ENCODE measurements at regions of chr18 and their contacts with region 1.

Region 1: DNA sequence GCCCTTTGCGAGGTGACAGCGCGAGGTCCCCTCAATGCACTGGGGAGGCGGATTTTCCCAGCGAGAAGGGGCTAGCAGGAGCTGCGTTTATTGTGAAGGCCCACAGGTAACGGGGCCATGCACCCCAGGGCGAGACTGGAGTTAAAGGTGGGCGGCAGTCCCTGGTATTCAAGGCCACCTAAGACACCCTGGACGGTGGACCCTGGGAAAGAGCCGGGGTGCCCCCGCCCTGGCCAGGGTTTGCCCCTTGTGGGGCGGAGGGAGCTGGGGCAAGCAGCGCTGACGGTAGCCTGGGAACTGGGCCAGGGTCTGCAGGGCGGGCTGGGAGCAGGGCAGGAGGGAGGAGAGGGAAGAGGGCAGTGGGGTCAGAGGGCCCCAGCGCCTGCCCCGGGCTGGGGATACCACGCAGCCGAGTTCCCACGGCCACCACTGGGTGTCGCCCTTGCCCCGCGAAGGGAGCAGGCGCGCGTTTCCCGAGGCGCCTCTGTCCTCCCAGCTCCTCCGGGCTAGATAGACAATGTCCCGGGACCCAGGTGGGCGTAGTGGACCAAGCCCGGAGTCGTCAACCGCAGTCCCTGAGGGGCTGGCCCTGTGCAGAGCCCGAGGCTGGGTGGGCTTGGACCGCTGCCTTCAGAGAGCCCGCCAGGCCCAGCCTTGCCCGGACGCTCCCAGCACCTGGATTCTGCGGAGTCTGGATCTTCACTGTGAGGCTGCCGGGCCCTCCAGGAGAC is 80.2 kb downstream of the SMAD4 start:
- DNase-seq: peak; percentile 12 to 83 (median 56)
- ATAC-seq: peak; percentile 85
- H3K4me3 ChIP-seq: no peak overlapping the region
- H3K4me3 Mint-ChIP-seq: no peak overlapping the region
- H3K27ac ChIP-seq: no peak overlapping the region
- H3K27ac Mint-ChIP-seq: no peak overlapping the region
- H3K4me1 ChIP-seq: peaks cover 0 to 9% of the 10 kb centered on the region in 2 donors
- H3K4me1 Mint-ChIP-seq: peaks cover 10 to 16% (median 13%) of the 10 kb centered on the region in 7 donors
- H3K27me3 ChIP-seq: no peaks in the 10 kb centered on the region
- H3K27me3 Mint-ChIP-seq: no peaks in the 10 kb centered on the region

Region 2: GRCh38 chr18:51153659-51154371 is 43.6 kb after region 1 on chr18:
- CTCF ChIA-PET with region 1: no interaction called
- POLR2A ChIA-PET with region 1: no interaction called
- intact Hi-C with region 1: loop called in 1 of 2 experiments (anchors 1 kb)
- DNase-seq: peak; percentile 35 to 65 (median 55)
- ATAC-seq: peak; percentile 76
- H3K4me3 ChIP-seq: peak overlapping the region; percentile 52
- H3K4me3 Mint-ChIP-seq: peak overlapping the region; percentile 80 to 96 (median 87)
- H3K27ac ChIP-seq: peak overlapping the region; percentile 61
- H3K27ac Mint-ChIP-seq: peak overlapping the region; percentile 91 to 98 (median 94)
- H3K4me1 ChIP-seq: peaks cover 22 to 23% of the 10 kb centered on the region in 2 donors
- H3K4me1 Mint-ChIP-seq: peaks cover 19 to 44% (median 37%) of the 10 kb centered on the region in 7 donors
- H3K27me3 ChIP-seq: no peaks in the 10 kb centered on the region
- H3K27me3 Mint-ChIP-seq: no peaks in the 10 kb centered on the region

Region 3: GRCh38 chr18:51171223-51171622 is 61.0 kb after region 1 on chr18:
- CTCF ChIA-PET with region 1: no interaction called
- POLR2A ChIA-PET with region 1: no interaction called
- intact Hi-C with region 1: loop called in 1 of 2 experiments (anchors 1 kb)
- DNase-seq: no peak
- ATAC-seq: no peak
- H3K4me3 ChIP-seq: no peak overlapping the region
- H3K4me3 Mint-ChIP-seq: peak overlapping the region in 1 of 10 donors; percentile 44
- H3K27ac ChIP-seq: no peak overlapping the region
- H3K27ac Mint-ChIP-seq: peak overlapping the region in 5 of 9 donors; percentile 25 to 83 (median 46)
- H3K4me1 ChIP-seq: no peaks in the 10 kb centered on the region
- H3K4me1 Mint-ChIP-seq: peaks cover under 1 to 66% (median 31%) of the 10 kb centered on the region in 7 donors
- H3K27me3 ChIP-seq: no peaks in the 10 kb centered on the region
- H3K27me3 Mint-ChIP-seq: no peaks in the 10 kb centered on the region

Region 4: DNA sequence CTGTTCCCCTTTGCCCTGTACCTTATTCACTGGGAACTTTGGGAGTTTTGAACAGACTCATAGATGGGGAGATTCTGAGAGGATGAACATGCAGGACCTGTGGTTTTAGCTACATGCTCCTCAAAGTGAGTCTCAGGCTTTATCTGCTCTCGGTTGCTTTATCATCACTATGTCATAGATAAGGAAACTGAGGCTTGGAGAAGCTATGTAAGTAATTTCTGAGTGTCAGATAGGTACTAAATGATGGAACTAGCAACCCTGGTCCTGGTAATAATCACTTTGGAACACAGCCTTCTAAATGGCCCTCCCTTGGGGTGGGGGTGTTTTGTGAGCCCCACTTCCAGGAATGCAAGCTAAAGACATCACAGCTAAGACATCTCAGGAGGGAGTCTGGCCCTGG is 273.5 kb after region 1 on chr18:
- CTCF ChIA-PET with region 1: no interaction called
- POLR2A ChIA-PET with region 1: no interaction called
- intact Hi-C with region 1: loop called (anchors 1 kb)
- DNase-seq: no peak
- ATAC-seq: no peak
- H3K4me3 ChIP-seq: no peak overlapping the region
- H3K4me3 Mint-ChIP-seq: no peak overlapping the region
- H3K27ac ChIP-seq: no peak overlapping the region
- H3K27ac Mint-ChIP-seq: no peak overlapping the region
- H3K4me1 ChIP-seq: no peaks in the 10 kb centered on the region
- H3K4me1 Mint-ChIP-seq: no peaks in the 10 kb centered on the region
- H3K27me3 ChIP-seq: no peaks in the 10 kb centered on the region
- H3K27me3 Mint-ChIP-seq: peaks cover 0 to 9% (median 6%) of the 10 kb centered on the region in 5 donors

Region 5: DNA sequence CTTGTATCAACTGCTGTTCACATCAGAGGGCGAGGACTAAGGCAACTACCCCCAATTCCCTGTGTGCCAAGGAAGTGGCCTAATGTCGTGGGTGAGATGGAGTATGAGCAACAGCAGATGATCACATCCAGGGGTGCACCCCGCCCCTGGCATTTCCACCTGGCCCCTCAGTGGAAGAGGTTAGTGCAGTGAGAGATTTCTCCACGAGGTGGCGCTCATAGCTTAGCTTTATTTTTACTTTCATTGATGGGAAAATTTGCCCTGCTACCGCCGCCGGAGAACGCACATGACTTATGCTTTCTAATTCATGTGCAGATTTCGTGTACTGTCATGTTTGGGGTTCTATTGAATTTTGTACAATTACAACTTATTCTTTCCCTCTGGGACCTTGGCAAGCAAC is 557.9 kb after region 1 on chr18:
- CTCF ChIA-PET with region 1: no interaction called
- POLR2A ChIA-PET with region 1: no interaction called
- intact Hi-C with region 1: loop called in 1 of 2 experiments (anchors 5 kb)
- DNase-seq: peak in 2 of 9 donors; percentile 2 to 39
- ATAC-seq: no peak
- H3K4me3 ChIP-seq: no peak overlapping the region
- H3K4me3 Mint-ChIP-seq: no peak overlapping the region
- H3K27ac ChIP-seq: no peak overlapping the region
- H3K27ac Mint-ChIP-seq: no peak overlapping the region
- H3K4me1 ChIP-seq: no peaks in the 10 kb centered on the region
- H3K4me1 Mint-ChIP-seq: peaks cover 0 to 3% (median 0%) of the 10 kb centered on the region in 7 donors
- H3K27me3 ChIP-seq: peaks cover 0 to 7% of the 10 kb centered on the region in 2 donors
- H3K27me3 Mint-ChIP-seq: peaks cover 0 to 52% (median 27%) of the 10 kb centered on the region in 5 donors

Region 6: GRCh38 chr18:51721388-51721787 is 611.1 kb after region 1 on chr18:
- CTCF ChIA-PET with region 1: no interaction called
- POLR2A ChIA-PET with region 1: no interaction called
- intact Hi-C with region 1: loop called in 1 of 2 experiments (anchors 2 kb)
- DNase-seq: no peak
- ATAC-seq: no peak
- H3K4me3 ChIP-seq: no peak overlapping the region
- H3K4me3 Mint-ChIP-seq: no peak overlapping the region
- H3K27ac ChIP-seq: no peak overlapping the region
- H3K27ac Mint-ChIP-seq: no peak overlapping the region
- H3K4me1 ChIP-seq: no peaks in the 10 kb centered on the region
- H3K4me1 Mint-ChIP-seq: no peaks in the 10 kb centered on the region
- H3K27me3 ChIP-seq: no peaks in the 10 kb centered on the region
- H3K27me3 Mint-ChIP-seq: peaks cover 0 to 18% (median 5%) of the 10 kb centered on the region in 5 donors

Region 7: GRCh38 chr18:52288403-52289004 is 1178.3 kb after region 1 on chr18:
- CTCF ChIA-PET with region 1: no interaction called
- POLR2A ChIA-PET with region 1: no interaction called
- intact Hi-C with region 1: loop called in 1 of 2 experiments (anchors 2 kb)
- DNase-seq: no peak
- ATAC-seq: no peak
- H3K4me3 ChIP-seq: no peak overlapping the region
- H3K4me3 Mint-ChIP-seq: no peak overlapping the region
- H3K27ac ChIP-seq: no peak overlapping the region
- H3K27ac Mint-ChIP-seq: no peak overlapping the region
- H3K4me1 ChIP-seq: no peaks in the 10 kb centered on the region
- H3K4me1 Mint-ChIP-seq: no peaks in the 10 kb centered on the region
- H3K27me3 ChIP-seq: no peaks in the 10 kb centered on the region
- H3K27me3 Mint-ChIP-seq: peaks cover 0 to 4% (median 0%) of the 10 kb centered on the region in 5 donors

Measured in naive thymus-derived CD4-positive, alpha-beta T cell (primary cell).